T-cell (primary cell): ENCODE measurements at regions of chr2 and their contacts with region 1.

Region 1: DNA sequence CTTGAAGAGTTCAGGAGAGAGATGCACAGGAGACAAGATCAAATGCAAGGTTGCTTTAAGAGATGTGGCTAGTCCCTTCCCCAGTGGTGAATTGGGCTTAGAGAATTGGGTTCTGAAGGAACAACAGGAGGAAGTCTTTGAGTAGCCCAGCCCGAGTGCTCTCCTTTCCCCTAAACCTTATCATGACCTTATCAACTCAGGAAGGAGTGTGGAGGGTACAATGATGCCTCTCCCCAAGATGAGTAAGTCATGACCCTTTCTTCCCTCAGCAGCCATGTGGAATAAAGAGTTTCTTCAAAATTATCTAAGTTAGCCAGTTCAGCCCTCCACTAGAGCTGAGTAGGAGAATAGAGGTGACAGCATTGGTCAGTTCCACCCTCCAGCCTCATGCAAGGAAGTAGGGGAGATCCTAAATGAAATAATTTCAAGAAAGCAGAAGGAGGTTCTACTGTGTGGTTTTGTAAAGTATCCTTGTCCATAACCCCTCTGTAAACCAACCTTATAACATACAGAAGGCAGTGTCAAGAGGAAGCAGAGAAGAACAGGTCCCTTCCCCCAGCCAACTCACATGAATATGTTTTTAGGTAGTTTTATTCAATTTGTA is 88.4 kb downstream of the ARHGAP15 start:
- DNase-seq: no peak
- ATAC-seq: peak in 2 of 4 experiments; percentile 16 to 17
- H3K4me3 ChIP-seq: no peak overlapping the region
- H3K4me3 Mint-ChIP-seq: no peak overlapping the region
- H3K27ac ChIP-seq: no peak overlapping the region
- H3K27ac Mint-ChIP-seq: peak overlapping the region; percentile 84 to 89
- H3K4me1 ChIP-seq: peaks cover 0 to 4% of the 10 kb centered on the region in 2 experiments
- H3K4me1 Mint-ChIP-seq: peaks cover 61 to 68% (median 66%) of the 10 kb centered on the region in 3 donors
- H3K27me3 ChIP-seq: no peaks in the 10 kb centered on the region
- H3K27me3 Mint-ChIP-seq: no peaks in the 10 kb centered on the region

Region 2: DNA sequence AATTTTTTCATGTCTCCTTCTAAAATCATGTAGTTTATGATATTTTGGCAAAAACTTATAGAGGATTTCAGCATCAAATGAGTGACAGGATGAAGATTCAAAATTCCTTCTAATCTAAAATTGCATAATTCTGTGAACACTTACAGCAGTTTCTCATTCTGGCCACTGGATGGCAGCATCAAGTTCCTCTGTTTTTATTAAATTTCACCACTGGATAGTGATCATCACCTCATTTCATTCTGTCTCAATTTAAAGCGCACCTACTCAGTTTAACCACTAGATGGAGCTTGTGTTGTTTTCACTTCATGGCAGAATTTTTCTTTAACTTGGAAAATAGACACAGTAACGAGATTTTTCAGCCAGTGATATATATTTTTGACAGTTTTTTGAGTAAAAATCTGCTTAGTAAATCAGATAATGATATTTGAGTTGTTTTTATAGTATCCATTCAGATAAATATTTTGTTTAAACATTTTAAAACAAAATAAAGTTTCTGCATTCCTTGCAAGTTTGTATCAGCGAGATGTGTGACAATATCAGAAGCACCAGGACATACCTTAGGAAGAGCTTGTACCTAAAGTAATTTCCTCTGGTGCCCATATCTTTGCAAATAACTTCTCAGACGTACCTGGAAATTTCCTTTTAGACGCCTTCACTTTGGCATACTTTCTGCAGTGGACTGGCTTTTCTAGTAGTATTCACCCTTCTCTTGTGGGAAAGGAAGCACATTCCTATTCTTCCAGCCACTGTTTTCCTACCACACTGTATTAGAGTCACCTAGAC is 183.1 kb before region 1 on chr2:
- CTCF ChIA-PET with region 1: interaction called, 3 to 11 read pairs
- POLR2A ChIA-PET with region 1: no interaction called
- DNase-seq: peak in 34 of 35 experiments; percentile 10 to 88 (median 45)
- ATAC-seq: peak; percentile 88 to 98 (median 96)
- H3K4me3 ChIP-seq: no peak overlapping the region
- H3K4me3 Mint-ChIP-seq: no peak overlapping the region
- H3K27ac ChIP-seq: no peak overlapping the region
- H3K27ac Mint-ChIP-seq: no peak overlapping the region
- H3K4me1 ChIP-seq: no peaks in the 10 kb centered on the region
- H3K4me1 Mint-ChIP-seq: peaks cover 0 to 6% (median 5%) of the 10 kb centered on the region in 3 donors
- H3K27me3 ChIP-seq: no peaks in the 10 kb centered on the region
- H3K27me3 Mint-ChIP-seq: peaks cover 0 to 2% of the 10 kb centered on the region in 2 donors

Region 3: DNA sequence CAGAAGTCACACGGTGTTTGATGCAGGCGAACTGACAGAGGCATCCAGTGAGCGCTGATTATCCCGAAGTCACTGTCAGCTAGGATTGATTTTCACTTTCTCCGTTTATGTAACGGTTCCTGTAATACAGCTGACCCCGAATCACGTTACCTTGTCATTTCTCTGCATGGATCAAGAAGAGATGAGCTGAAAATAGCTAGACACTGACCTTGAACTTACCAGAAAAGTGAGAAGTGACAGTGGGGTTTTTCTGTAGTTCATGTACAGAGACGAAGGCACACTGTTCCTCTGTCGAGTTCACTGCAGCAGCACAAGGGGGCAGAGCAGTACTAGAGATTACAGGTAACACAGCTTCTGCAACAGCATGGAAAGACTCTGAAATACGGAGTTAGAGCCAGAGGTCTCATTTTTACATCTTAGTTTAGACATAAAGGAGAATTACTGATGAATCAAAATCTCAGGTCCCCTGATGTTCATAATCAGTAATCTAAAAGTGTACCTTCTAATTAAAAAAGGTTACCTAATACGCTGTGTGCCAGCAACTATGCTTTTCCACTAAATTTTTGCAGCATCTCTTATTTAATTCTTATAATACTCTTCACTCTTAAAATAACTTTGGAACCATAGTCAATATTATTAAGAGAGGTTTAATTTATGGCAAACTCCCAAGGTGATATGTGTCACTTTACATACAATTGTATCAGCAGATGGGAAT is 55.3 kb before region 1 on chr2:
- CTCF ChIA-PET with region 1: interaction called, 6 to 17 read pairs
- POLR2A ChIA-PET with region 1: no interaction called
- DNase-seq: peak in 34 of 35 experiments; percentile 37 to 83 (median 61)
- ATAC-seq: peak; percentile 90 to 99 (median 94)
- H3K4me3 ChIP-seq: no peak overlapping the region
- H3K4me3 Mint-ChIP-seq: no peak overlapping the region
- H3K27ac ChIP-seq: peak overlapping the region; percentile 3
- H3K27ac Mint-ChIP-seq: peak overlapping the region; percentile 82 to 90
- H3K4me1 ChIP-seq: peaks cover 12 to 28% of the 10 kb centered on the region in 2 experiments
- H3K4me1 Mint-ChIP-seq: peaks cover 89 to 95% (median 90%) of the 10 kb centered on the region in 3 donors
- H3K27me3 ChIP-seq: no peaks in the 10 kb centered on the region
- H3K27me3 Mint-ChIP-seq: no peaks in the 10 kb centered on the region

Region 4: GRCh38 chr2:143205106-143205764 is 12.4 kb before region 1 on chr2:
- CTCF ChIA-PET with region 1: interaction called, 6 to 18 read pairs
- POLR2A ChIA-PET with region 1: interaction called, 3 to 4 read pairs
- DNase-seq: peak in 1 of 35 experiments; percentile 66
- ATAC-seq: peak; percentile 77 to 83 (median 82)
- H3K4me3 ChIP-seq: no peak overlapping the region
- H3K4me3 Mint-ChIP-seq: peak overlapping the region in 1 of 3 donors; percentile 2
- H3K27ac ChIP-seq: peak overlapping the region; percentile 53
- H3K27ac Mint-ChIP-seq: peak overlapping the region; percentile 52 to 91
- H3K4me1 ChIP-seq: peaks cover 10 to 14% of the 10 kb centered on the region in 2 experiments
- H3K4me1 Mint-ChIP-seq: peaks cover 69 to 76% (median 69%) of the 10 kb centered on the region in 3 donors
- H3K27me3 ChIP-seq: no peaks in the 10 kb centered on the region
- H3K27me3 Mint-ChIP-seq: no peaks in the 10 kb centered on the region

Region 5: GRCh38 chr2:143241403-143242088 is 23.9 kb after region 1 on chr2:
- CTCF ChIA-PET with region 1: interaction called, 10 read pairs
- POLR2A ChIA-PET with region 1: no interaction called
- DNase-seq: no peak
- ATAC-seq: no peak
- H3K4me3 ChIP-seq: no peak overlapping the region
- H3K4me3 Mint-ChIP-seq: no peak overlapping the region
- H3K27ac ChIP-seq: no peak overlapping the region
- H3K27ac Mint-ChIP-seq: peak overlapping the region; percentile 52 to 64
- H3K4me1 ChIP-seq: peaks cover 14% of the 10 kb centered on the region in 2 experiments
- H3K4me1 Mint-ChIP-seq: peaks cover 28 to 34% (median 32%) of the 10 kb centered on the region in 3 donors
- H3K27me3 ChIP-seq: no peaks in the 10 kb centered on the region
- H3K27me3 Mint-ChIP-seq: no peaks in the 10 kb centered on the region

Region 6: DNA sequence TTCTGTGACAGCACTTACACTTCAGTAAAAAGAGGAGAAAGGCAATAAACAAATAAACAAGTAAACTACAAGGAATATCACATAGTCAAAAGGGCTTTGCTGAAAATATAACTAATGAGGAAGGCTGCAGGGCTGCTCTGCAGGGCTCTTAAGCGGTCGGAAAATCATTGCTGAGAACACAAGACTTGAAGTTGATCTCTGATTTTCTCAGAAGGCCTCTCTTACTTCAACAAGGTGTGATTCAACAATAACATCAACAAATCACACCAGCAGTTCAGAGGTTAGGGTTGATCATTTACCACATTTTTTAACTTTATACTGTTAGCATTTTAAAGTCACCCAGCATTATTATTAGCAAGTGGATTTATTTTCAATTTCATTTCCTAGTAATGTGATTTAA is 127.2 kb after region 1 on chr2:
- CTCF ChIA-PET with region 1: no interaction called
- POLR2A ChIA-PET with region 1: no interaction called
- DNase-seq: no peak
- ATAC-seq: no peak
- H3K4me3 ChIP-seq: no peak overlapping the region
- H3K4me3 Mint-ChIP-seq: no peak overlapping the region
- H3K27ac ChIP-seq: no peak overlapping the region
- H3K27ac Mint-ChIP-seq: no peak overlapping the region
- H3K4me1 ChIP-seq: no peaks in the 10 kb centered on the region
- H3K4me1 Mint-ChIP-seq: peaks cover 56 to 70% (median 59%) of the 10 kb centered on the region in 3 donors
- H3K27me3 ChIP-seq: no peaks in the 10 kb centered on the region
- H3K27me3 Mint-ChIP-seq: no peaks in the 10 kb centered on the region

Region 7: GRCh38 chr2:143513081-143513480 is 295.5 kb after region 1 on chr2:
- CTCF ChIA-PET with region 1: no interaction called
- POLR2A ChIA-PET with region 1: no interaction called
- DNase-seq: peak in 1 of 35 experiments; percentile 19
- ATAC-seq: no peak
- H3K4me3 ChIP-seq: no peak overlapping the region
- H3K4me3 Mint-ChIP-seq: no peak overlapping the region
- H3K27ac ChIP-seq: no peak overlapping the region
- H3K27ac Mint-ChIP-seq: no peak overlapping the region
- H3K4me1 ChIP-seq: no peaks in the 10 kb centered on the region
- H3K4me1 Mint-ChIP-seq: peaks cover 8 to 23% (median 19%) of the 10 kb centered on the region in 3 donors
- H3K27me3 ChIP-seq: no peaks in the 10 kb centered on the region
- H3K27me3 Mint-ChIP-seq: no peaks in the 10 kb centered on the region